Kidney (tissue), 22 donors: ENCODE measurements at regions of chr1 and their contacts with region 1.

Region 1: DNA sequence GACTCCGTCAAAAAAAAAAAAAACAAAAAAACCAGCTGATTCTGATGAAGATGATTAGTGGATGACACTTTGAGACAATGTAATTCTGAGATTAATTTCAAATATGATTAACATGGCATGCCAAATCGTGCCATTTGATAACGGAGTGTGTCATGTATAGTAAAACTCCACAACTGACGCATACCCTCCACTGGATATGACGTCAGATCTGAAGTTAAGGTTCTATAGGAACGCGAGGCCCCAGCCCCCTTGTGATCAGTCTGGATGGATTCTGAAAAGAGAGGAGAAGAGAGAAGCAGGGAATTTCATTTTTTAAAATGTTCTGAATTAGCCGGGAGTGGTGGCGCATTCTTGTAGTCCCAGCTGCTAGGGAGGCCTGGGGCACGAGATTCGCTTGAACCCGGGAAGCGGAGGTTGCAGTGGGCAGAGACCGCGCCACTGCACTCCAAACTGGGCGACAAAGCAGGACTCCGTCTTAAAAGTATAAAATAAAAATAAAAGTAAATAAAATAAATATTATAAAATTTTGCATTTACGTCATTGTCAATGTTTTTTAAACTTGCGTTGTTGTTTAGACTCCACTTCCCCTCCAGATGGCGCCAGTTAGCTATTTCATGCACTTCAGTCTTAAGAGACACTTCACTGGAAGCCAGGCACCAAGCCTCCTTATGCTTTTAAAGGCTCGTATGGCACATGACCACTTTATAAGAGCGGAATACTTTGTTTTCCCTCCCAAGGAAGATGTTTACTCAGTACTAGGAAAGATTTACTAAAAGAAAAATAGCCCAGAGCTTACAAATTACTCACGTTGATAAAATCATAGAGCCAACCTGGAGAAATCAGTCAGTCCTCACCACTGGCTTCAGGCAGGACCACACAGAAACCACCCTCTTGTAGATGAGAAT is 65.5 kb downstream of the UBE2U start:
- DNase-seq: peak in 4 of 5 donors; percentile 64 to 95 (median 84)
- H3K4me3 ChIP-seq: no peak overlapping the region
- H3K27ac ChIP-seq: no peak overlapping the region
- H3K4me1 ChIP-seq: peaks cover 0 to 3% (median 0%) of the 10 kb centered on the region in 3 donors
- H3K27me3 ChIP-seq: no peaks in the 10 kb centered on the region
- CTCF ChIP-seq: peak; percentile 75

Region 2: GRCh38 chr1:63821091-63822005 is 447.6 kb before region 1 on chr1:
- intact Hi-C with region 1: no loop called
- DNase-seq: peak in 2 of 5 donors; percentile 35 to 44
- H3K4me3 ChIP-seq: peak overlapping the region in 1 of 3 donors; percentile 7
- H3K27ac ChIP-seq: no peak overlapping the region
- H3K4me1 ChIP-seq: peaks cover 0 to 3% (median 0%) of the 10 kb centered on the region in 3 donors
- H3K27me3 ChIP-seq: no peaks in the 10 kb centered on the region
- CTCF ChIP-seq: no peak

Region 3: GRCh38 chr1:64121766-64122385 is 147.0 kb before region 1 on chr1:
- intact Hi-C with region 1: no loop called
- DNase-seq: no peak
- H3K4me3 ChIP-seq: no peak overlapping the region
- H3K27ac ChIP-seq: no peak overlapping the region
- H3K4me1 ChIP-seq: no peaks in the 10 kb centered on the region
- H3K27me3 ChIP-seq: no peaks in the 10 kb centered on the region
- CTCF ChIP-seq: no peak

Region 4: GRCh38 chr1:64453688-64454087 is 184.8 kb after region 1 on chr1:
- intact Hi-C with region 1: no loop called
- DNase-seq: no peak
- H3K4me3 ChIP-seq: no peak overlapping the region
- H3K27ac ChIP-seq: no peak overlapping the region
- H3K4me1 ChIP-seq: no peaks in the 10 kb centered on the region
- H3K27me3 ChIP-seq: no peaks in the 10 kb centered on the region
- CTCF ChIP-seq: no peak

Region 5: GRCh38 chr1:64675718-64676345 is 406.9 kb after region 1 on chr1:
- intact Hi-C with region 1: loop called (anchors 5 kb)
- DNase-seq: peak in 2 of 5 donors; percentile 43 to 47
- H3K4me3 ChIP-seq: no peak overlapping the region
- H3K27ac ChIP-seq: no peak overlapping the region
- H3K4me1 ChIP-seq: no peaks in the 10 kb centered on the region
- H3K27me3 ChIP-seq: no peaks in the 10 kb centered on the region
- CTCF ChIP-seq: peak; percentile 59